CD8-positive, alpha-beta T cell (primary cell): ENCODE measurements at regions of chr2 and their contacts with region 1.

Region 1: GRCh38 chr2:135004005-135004746 is 43.1 kb downstream of the MAP3K19 start:
- DNase-seq: peak; percentile 38 to 84 (median 71)
- ATAC-seq: peak; percentile 90
- H3K4me3 ChIP-seq: no peak overlapping the region
- H3K4me3 Mint-ChIP-seq: no peak overlapping the region
- H3K27ac ChIP-seq: no peak overlapping the region
- H3K27ac Mint-ChIP-seq: no peak overlapping the region
- H3K4me1 ChIP-seq: peaks cover 4% of the 10 kb centered on the region
- H3K4me1 Mint-ChIP-seq: peaks cover 5% of the 10 kb centered on the region
- H3K27me3 ChIP-seq: no peaks in the 10 kb centered on the region
- H3K27me3 Mint-ChIP-seq: peaks cover 6% of the 10 kb centered on the region
- CTCF ChIP-seq: peak; percentile 90

Region 2: DNA sequence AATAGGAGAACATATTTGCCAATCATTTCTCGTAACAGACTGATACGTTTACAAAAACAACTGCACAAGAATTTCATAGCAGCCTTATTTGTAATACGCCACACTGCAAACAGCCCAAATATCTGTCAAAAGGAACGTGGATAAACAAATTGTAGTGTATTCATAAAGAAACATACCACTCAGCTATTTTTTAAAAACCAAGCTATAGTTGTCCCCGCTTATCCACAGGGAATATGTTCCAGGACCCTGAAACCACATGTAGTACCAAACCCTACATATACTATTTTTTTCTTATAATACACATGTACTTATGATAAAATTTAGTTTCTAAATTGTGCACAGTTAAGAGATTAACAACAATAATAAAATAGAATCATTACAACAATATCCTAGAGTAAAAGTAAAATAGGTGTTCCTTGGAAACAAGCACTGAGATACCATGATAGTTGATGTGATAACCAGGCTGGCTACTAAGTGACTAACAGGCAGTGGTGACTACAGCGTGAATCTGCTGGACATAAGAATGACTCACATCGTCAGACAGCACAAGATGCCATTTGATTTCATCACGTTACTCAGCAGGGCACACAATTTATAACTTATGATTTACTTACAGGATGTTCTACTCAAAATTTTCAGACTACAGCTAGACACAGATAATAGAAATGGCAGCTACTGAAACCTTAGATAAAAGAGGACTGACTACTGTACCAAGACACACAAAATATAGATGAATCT is 1803.3 kb before region 1 on chr2:
- CTCF ChIA-PET with region 1: no interaction called
- POLR2A ChIA-PET with region 1: no interaction called
- intact Hi-C with region 1: no loop called
- DNase-seq: no peak
- ATAC-seq: no peak
- H3K4me3 ChIP-seq: no peak overlapping the region
- H3K4me3 Mint-ChIP-seq: no peak overlapping the region
- H3K27ac ChIP-seq: no peak overlapping the region
- H3K27ac Mint-ChIP-seq: no peak overlapping the region
- H3K4me1 ChIP-seq: no peaks in the 10 kb centered on the region
- H3K4me1 Mint-ChIP-seq: no peaks in the 10 kb centered on the region
- H3K27me3 ChIP-seq: no peaks in the 10 kb centered on the region
- H3K27me3 Mint-ChIP-seq: no peaks in the 10 kb centered on the region
- CTCF ChIP-seq: no peak

Region 3: DNA sequence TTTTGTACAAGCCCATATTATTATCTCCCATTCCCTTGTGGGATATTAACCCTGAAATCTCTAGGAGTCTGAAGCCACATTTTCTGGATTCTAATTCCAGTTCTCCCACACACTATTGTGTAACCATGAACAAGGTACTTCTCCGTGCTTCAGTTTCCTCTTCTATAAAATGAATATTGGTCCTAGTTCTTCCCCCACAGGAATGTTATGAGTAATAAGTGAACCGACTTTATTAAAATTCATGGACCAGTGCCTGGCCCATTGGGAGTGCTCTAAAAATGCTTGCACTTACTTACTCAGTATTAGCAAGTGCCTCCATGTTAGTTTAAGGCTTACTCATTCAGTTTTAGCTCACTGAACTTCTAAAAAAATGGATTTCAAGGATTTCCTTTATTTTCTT is 167.2 kb before region 1 on chr2:
- CTCF ChIA-PET with region 1: no interaction called
- POLR2A ChIA-PET with region 1: no interaction called
- intact Hi-C with region 1: no loop called
- DNase-seq: no peak
- ATAC-seq: no peak
- H3K4me3 ChIP-seq: no peak overlapping the region
- H3K4me3 Mint-ChIP-seq: no peak overlapping the region
- H3K27ac ChIP-seq: no peak overlapping the region
- H3K27ac Mint-ChIP-seq: no peak overlapping the region
- H3K4me1 ChIP-seq: no peaks in the 10 kb centered on the region
- H3K4me1 Mint-ChIP-seq: no peaks in the 10 kb centered on the region
- H3K27me3 ChIP-seq: no peaks in the 10 kb centered on the region
- H3K27me3 Mint-ChIP-seq: peaks cover 14% of the 10 kb centered on the region
- CTCF ChIP-seq: no peak

Region 4: GRCh38 chr2:134988994-134989605 is 15.1 kb before region 1 on chr2:
- CTCF ChIA-PET with region 1: interaction called, 27 read pairs
- POLR2A ChIA-PET with region 1: interaction called, 4 read pairs
- intact Hi-C with region 1: no loop called
- DNase-seq: peak in 2 of 9 experiments; percentile 33 to 49
- ATAC-seq: peak; percentile 40
- H3K4me3 ChIP-seq: no peak overlapping the region
- H3K4me3 Mint-ChIP-seq: no peak overlapping the region
- H3K27ac ChIP-seq: no peak overlapping the region
- H3K27ac Mint-ChIP-seq: no peak overlapping the region
- H3K4me1 ChIP-seq: no peaks in the 10 kb centered on the region
- H3K4me1 Mint-ChIP-seq: peaks cover 3% of the 10 kb centered on the region
- H3K27me3 ChIP-seq: peaks cover 0 to 2% of the 10 kb centered on the region in 2 experiments
- H3K27me3 Mint-ChIP-seq: peaks cover 7% of the 10 kb centered on the region
- CTCF ChIP-seq: peak; percentile 40

Region 5: DNA sequence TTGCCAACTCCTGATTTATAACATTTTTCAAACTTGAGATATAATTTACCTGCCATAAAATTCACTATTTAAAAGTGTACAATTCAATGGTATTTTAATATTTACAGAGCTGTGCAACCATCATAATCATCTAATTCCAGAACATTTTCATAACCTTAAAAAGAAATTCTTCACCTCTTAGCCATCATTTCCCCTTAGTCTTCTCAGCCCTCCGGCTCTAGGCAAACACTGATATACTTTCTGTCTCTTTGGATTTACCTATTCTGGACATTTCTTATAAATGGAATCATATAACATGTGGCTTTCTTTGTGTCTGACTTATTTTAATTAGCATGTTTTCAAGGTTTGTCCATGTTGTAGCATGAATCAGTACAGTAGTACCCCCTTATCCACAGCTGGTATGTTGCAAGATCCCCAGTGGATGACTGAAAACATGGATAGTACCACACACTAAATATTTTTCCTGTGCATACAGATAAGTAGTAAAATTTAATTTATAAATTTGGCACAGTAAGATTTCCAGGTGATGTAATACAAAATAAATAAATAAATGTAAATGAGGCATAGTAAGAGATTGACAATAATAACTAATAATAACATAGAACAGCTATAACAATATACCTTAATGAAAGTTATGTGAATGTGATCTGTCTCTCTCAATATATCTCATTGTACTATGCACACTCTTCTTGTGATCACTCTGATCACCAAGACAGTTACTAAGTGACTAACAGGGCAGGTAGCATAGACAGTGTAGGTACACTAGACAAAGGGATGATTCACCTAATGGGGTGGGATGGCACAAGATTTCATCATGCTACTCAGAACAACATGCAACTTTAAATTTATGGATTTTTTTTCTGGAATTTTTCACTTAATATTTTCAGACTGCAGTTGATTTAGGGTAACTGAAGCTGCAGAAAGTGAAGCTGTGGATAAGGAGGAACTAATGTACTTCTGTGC is 121.0 kb after region 1 on chr2:
- CTCF ChIA-PET with region 1: no interaction called
- POLR2A ChIA-PET with region 1: no interaction called
- intact Hi-C with region 1: loop called (anchors 10 kb)
- DNase-seq: no peak
- ATAC-seq: no peak
- H3K4me3 ChIP-seq: no peak overlapping the region
- H3K4me3 Mint-ChIP-seq: no peak overlapping the region
- H3K27ac ChIP-seq: no peak overlapping the region
- H3K27ac Mint-ChIP-seq: peak overlapping the region; percentile 7
- H3K4me1 ChIP-seq: no peaks in the 10 kb centered on the region
- H3K4me1 Mint-ChIP-seq: no peaks in the 10 kb centered on the region
- H3K27me3 ChIP-seq: no peaks in the 10 kb centered on the region
- H3K27me3 Mint-ChIP-seq: no peaks in the 10 kb centered on the region
- CTCF ChIP-seq: no peak

Region 6: GRCh38 chr2:135257383-135258090 is 253.4 kb after region 1 on chr2:
- CTCF ChIA-PET with region 1: no interaction called
- POLR2A ChIA-PET with region 1: no interaction called
- intact Hi-C with region 1: loop called in 1 of 2 experiments (anchors 2 kb)
- DNase-seq: no peak
- ATAC-seq: no peak
- H3K4me3 ChIP-seq: no peak overlapping the region
- H3K4me3 Mint-ChIP-seq: no peak overlapping the region
- H3K27ac ChIP-seq: no peak overlapping the region
- H3K27ac Mint-ChIP-seq: no peak overlapping the region
- H3K4me1 ChIP-seq: no peaks in the 10 kb centered on the region
- H3K4me1 Mint-ChIP-seq: no peaks in the 10 kb centered on the region
- H3K27me3 ChIP-seq: no peaks in the 10 kb centered on the region
- H3K27me3 Mint-ChIP-seq: no peaks in the 10 kb centered on the region
- CTCF ChIP-seq: no peak

Region 7: DNA sequence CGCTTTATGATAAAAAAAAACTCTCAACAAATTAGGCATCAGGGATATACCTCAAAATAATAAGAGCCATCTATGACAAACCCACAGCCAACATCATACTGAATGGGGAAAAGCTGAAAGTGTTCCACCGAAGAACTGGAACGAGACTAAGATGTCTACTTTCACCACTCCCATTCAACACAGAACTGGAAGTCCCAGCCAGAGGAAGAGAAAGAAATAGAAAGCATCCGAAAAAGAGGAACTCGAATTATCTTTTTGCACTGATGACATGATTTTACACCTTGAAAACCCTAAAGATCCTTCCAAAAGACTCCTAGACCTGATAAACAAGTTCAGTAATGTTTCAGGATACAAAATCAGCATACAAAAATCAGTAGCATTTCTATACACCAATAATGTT is 405.3 kb after region 1 on chr2:
- CTCF ChIA-PET with region 1: no interaction called
- POLR2A ChIA-PET with region 1: no interaction called
- intact Hi-C with region 1: no loop called
- DNase-seq: no peak
- ATAC-seq: no peak
- H3K4me3 ChIP-seq: no peak overlapping the region
- H3K4me3 Mint-ChIP-seq: no peak overlapping the region
- H3K27ac ChIP-seq: no peak overlapping the region
- H3K27ac Mint-ChIP-seq: no peak overlapping the region
- H3K4me1 ChIP-seq: no peaks in the 10 kb centered on the region
- H3K4me1 Mint-ChIP-seq: no peaks in the 10 kb centered on the region
- H3K27me3 ChIP-seq: no peaks in the 10 kb centered on the region
- H3K27me3 Mint-ChIP-seq: no peaks in the 10 kb centered on the region
- CTCF ChIP-seq: no peak

Region 8: DNA sequence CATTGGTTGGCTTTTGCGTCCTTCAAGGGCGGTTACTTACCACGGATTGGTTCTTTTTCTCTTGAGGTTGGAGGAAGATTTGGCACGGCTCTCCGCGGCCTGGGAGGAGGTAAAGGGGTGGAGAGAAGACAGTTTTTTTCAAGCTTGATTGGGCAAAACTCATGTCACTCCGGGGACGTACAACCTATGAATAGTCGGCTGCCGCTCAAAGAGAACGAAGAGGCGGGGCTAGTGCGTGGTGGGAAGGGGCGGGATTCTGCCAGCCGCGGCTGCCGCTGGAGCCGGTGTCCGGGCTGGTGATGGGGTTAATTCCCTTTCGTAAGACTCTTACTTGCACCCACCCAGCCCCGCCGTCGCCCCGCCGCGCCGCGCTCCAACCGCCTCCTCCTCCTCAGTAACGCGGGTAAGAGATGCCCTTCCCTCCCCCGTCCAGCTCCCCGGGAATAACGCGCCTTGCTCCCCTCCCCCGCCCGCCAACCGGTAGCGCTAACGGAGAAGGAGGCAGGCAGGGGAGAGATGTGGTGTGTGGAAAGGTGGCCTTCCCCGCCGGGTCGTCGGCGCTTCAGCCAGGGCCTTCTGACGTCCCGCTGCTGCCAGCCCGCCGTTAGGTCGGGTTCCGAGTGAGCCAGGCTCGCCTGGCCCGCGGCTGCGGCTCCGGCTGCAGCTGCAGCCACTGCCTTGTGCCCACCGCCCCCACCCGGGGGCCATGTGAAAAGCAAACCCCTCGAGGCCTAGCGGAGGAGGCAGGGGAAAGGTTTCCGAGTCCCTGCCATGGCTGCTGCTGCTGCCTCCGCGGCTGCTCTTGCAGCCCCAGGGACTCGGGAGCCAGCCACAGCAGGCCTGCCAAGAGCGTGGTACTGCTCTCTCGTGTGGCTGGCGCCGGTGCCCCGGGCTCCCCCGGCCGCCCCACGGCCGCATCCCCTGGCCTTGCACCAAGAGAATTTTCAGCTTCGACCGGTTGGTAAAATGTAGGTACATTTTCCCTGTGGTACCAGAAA is 527.4 kb after region 1 on chr2 and contains the start of gene R3HDM1:
- CTCF ChIA-PET with region 1: interaction called, 5 read pairs
- POLR2A ChIA-PET with region 1: interaction called, 5 read pairs
- intact Hi-C with region 1: loop called in 1 of 2 experiments (anchors 1 kb)
- DNase-seq: peak; percentile 88 to 99 (median 94)
- ATAC-seq: peak; percentile 75
- H3K4me3 ChIP-seq: peak within 1 kb of the TSS; percentile 74 to 84
- H3K4me3 Mint-ChIP-seq: no peak within 1 kb of the TSS
- H3K27ac ChIP-seq: peak within 1 kb of the TSS; percentile 79 to 91
- H3K27ac Mint-ChIP-seq: no peak within 1 kb of the TSS
- H3K4me1 ChIP-seq: peaks cover 15% of the 10 kb centered on the region
- H3K4me1 Mint-ChIP-seq: peaks cover 29% of the 10 kb centered on the region
- H3K27me3 ChIP-seq: no peaks in the 10 kb centered on the region
- H3K27me3 Mint-ChIP-seq: no peaks in the 10 kb centered on the region
- CTCF ChIP-seq: no peak
- total RNA-seq, gene R3HDM1: 35.3 to 48.2 TPM

Region 9: DNA sequence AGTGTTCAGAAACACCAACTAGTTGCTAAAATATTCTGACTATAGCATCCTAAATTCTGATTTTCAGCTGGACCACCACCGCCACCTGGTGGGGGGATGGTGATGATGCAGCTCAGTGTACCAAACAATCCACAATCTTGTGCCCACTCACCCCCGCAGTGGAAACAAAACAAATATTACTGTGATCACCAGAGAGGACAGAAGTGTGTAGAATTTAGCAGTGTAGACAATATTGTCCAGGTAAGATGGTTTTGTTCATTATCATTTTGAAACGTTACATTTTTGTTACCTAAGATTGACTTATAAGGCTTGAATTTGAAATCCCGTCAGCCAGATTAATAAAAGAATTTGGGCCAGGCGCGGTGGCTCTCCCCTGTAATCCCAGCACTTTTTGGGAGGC is 705.8 kb after region 1 on chr2:
- CTCF ChIA-PET with region 1: interaction called, 113 read pairs
- POLR2A ChIA-PET with region 1: interaction called, 5 read pairs
- intact Hi-C with region 1: loop called (anchors 1 kb)
- DNase-seq: peak; percentile 49 to 87 (median 70)
- ATAC-seq: peak; percentile 86
- H3K4me3 ChIP-seq: no peak overlapping the region
- H3K4me3 Mint-ChIP-seq: no peak overlapping the region
- H3K27ac ChIP-seq: no peak overlapping the region
- H3K27ac Mint-ChIP-seq: no peak overlapping the region
- H3K4me1 ChIP-seq: no peaks in the 10 kb centered on the region
- H3K4me1 Mint-ChIP-seq: peaks cover 2% of the 10 kb centered on the region
- H3K27me3 ChIP-seq: no peaks in the 10 kb centered on the region
- H3K27me3 Mint-ChIP-seq: no peaks in the 10 kb centered on the region
- CTCF ChIP-seq: peak; percentile 98